Panc1 (cell line): ENCODE measurements at regions of chr13 and their contacts with region 1.

Region 1: GRCh38 chr13:49869519-49869918 is 66.6 kb downstream of the SPRYD7 start:
- DNase-seq: no peak
- ATAC-seq: no peak
- H3K4me3 ChIP-seq: no peak overlapping the region
- H3K27ac ChIP-seq: no peak overlapping the region
- H3K4me1 ChIP-seq: no peaks in the 10 kb centered on the region
- H3K27me3 ChIP-seq: no peaks in the 10 kb centered on the region
- CTCF ChIP-seq: peak; percentile 27

Region 2: DNA sequence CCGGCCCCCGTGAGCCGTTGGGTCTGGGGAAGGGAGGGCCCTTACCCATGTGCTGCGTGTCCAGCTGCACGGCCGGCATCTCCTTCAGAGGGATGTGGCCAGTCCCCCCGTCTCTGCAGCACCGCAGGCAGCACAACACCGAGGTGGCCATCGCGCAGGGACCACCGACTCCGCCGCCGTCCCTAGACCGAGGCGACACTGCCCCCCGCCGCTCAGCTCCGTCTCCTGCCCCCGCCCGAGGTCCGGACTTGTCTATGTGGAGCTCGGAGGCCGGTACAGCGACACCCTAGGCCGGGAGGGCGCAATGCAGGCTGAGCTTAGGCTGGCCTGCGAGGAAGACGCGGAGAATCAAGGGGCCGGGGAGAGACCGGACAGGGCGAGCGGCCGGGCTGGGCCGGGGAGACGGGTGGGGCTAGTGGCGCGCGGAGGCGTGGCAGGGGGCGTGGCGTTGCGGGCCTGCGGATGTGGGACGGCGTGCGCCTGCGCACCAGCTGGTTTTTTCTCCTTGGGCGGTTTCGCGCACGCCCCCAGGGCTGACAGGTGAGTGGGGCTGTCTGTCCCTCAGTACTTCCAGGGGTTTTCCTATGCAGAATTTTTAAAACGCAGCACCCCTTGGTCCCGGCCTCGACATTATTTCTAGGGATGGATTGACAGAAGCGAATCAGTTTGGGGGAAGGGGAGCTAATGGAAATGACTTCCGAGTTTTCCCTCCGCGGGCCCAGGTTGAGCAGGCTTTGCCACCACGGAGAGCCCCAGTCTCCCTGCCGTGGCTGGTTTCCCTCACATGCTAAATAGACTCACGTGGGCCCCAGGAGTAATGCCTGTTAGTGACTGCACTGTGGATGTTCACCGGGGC is 66.8 kb after region 1 on chr13 and contains the start of gene SPRYD7:
- CTCF ChIA-PET with region 1: no interaction called
- POLR2A ChIA-PET with region 1: no interaction called
- in situ Hi-C with region 1: no loop called
- intact Hi-C with region 1: no loop called
- DNase-seq: peak; percentile 75
- ATAC-seq: peak; percentile 98
- H3K4me3 ChIP-seq: peak within 1 kb of the TSS; percentile 76 to 85
- H3K27ac ChIP-seq: peak within 1 kb of the TSS; percentile 79
- H3K4me1 ChIP-seq: peaks cover 8% of the 10 kb centered on the region; the same call in 1 of the 2 replicates
- H3K27me3 ChIP-seq: no peaks in the 10 kb centered on the region
- CTCF ChIP-seq: peak; percentile 91
- total RNA-seq, gene SPRYD7: 6.2 TPM

Region 3: DNA sequence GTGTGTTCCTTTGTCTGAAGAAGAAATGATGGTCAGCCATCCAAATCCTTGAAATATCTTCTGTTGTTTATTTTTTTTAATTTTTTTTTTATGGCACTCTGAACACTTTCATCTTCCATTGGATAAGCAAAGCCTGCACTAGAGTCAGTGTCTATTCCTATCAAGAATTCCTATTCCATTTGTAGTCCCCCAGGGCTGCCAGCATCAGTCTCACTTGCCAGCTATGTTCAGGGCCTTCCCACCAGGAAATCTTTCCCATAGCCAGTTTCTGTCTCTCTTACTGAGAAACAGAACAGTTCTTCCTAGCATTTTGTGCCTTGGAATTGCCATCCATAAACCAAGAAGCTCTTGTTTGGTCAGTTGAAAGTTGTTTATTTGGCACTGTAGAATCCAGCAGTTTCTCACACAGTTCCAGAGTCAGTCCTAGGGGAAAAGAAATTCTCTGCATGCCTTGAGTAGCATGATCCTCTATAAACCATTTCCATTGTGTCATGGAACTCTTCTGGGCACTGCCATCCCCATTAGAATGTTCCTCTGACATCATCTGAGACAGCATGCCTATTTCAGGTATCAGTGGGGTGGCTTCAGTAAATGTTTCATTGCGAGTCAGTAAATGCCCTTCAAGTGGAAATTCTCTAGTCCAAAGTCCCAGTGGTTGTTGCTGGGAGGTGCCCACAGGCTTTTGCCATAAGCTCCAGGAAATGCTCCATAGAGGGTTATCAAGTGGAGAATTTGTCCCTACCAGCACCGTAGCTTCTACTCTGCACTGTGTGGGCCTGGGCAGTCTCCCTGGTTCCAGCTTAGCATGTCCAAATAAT is 85.4 kb after region 1 on chr13:
- CTCF ChIA-PET with region 1: interaction called, 10 read pairs
- POLR2A ChIA-PET with region 1: no interaction called
- in situ Hi-C with region 1: no loop called
- intact Hi-C with region 1: no loop called
- DNase-seq: no peak
- ATAC-seq: 0 out of 2 replicates have a peak, but pooled peaks have one; percentile 34
- H3K4me3 ChIP-seq: no peak overlapping the region
- H3K27ac ChIP-seq: no peak overlapping the region
- H3K4me1 ChIP-seq: no peaks in the 10 kb centered on the region
- H3K27me3 ChIP-seq: no peaks in the 10 kb centered on the region
- CTCF ChIP-seq: no peak

Region 4: GRCh38 chr13:50015258-50015657 is 145.7 kb after region 1 on chr13 and contains the start of gene KCNRG:
- CTCF ChIA-PET with region 1: no interaction called
- POLR2A ChIA-PET with region 1: no interaction called
- in situ Hi-C with region 1: no loop called
- intact Hi-C with region 1: no loop called
- DNase-seq: no peak
- ATAC-seq: no peak
- H3K4me3 ChIP-seq: no peak within 1 kb of the TSS
- H3K27ac ChIP-seq: no peak within 1 kb of the TSS
- H3K4me1 ChIP-seq: peaks cover 9% of the 10 kb centered on the region
- H3K27me3 ChIP-seq: no peaks in the 10 kb centered on the region
- CTCF ChIP-seq: no peak
- total RNA-seq, gene KCNRG: 0.31 TPM